Endothelial cell of umbilical vein (primary cell): ENCODE measurements at regions of chr10 and their contacts with region 1.

Region 1: GRCh38 chr10:79608505-79609375 is 2.0 kb upstream of the SFTPA1 start:
- DNase-seq: peak; percentile 13
- H3K4me3 ChIP-seq: no peak overlapping the region
- H3K27ac ChIP-seq: no peak overlapping the region
- H3K4me1 ChIP-seq: no peaks in the 10 kb centered on the region
- H3K27me3 ChIP-seq: peaks cover 0 to 3% of the 10 kb centered on the region in 2 experiments
- CTCF ChIP-seq: peak; percentile 68 to 79
- POLR2A ChIP-seq: no peak

Region 2: GRCh38 chr10:79542626-79543025 is 66.1 kb before region 1 on chr10:
- CTCF ChIA-PET with region 1: no interaction called
- POLR2A ChIA-PET with region 1: no interaction called
- dilution Hi-C with region 1: no loop called
- intact Hi-C with region 1: loop called (anchors 1 kb)
- DNase-seq: no peak
- H3K4me3 ChIP-seq: no peak overlapping the region
- H3K27ac ChIP-seq: no peak overlapping the region
- H3K4me1 ChIP-seq: no peaks in the 10 kb centered on the region
- H3K27me3 ChIP-seq: no peaks in the 10 kb centered on the region
- CTCF ChIP-seq: no peak
- POLR2A ChIP-seq: no peak

Region 3: DNA sequence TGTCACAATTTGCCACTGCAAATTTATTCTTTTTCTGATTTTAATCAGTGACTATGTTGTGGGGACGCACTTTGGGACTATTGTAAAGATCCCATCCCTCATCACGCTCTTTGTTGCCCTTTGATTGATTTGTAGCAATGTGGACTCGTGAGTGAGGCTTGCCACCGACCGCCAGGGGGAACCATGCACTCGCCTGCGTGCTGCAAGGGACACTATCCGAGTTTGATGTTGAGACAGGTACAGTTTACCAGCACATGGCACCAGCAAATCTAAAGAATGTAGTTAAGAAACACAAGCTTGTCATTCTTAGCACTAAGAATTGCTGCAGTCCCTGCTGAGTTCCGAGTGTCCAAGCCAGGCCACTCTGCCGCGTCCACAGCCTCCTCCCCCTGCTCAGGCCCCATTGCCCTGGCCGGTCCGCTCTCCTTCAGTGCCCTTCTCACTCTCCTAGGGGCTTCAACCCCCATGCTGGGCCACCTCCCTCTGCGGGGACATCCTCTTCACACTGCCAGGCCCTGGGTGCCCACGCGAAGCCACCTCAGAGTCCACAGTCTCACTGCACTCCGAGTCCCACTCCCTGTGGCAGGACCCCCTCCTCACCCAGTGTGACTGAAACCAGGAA is 46.5 kb before region 1 on chr10:
- CTCF ChIA-PET with region 1: no interaction called
- POLR2A ChIA-PET with region 1: no interaction called
- dilution Hi-C with region 1: no loop called
- intact Hi-C with region 1: loop called (anchors 1 kb)
- DNase-seq: peak; percentile 56
- H3K4me3 ChIP-seq: no peak overlapping the region
- H3K27ac ChIP-seq: no peak overlapping the region
- H3K4me1 ChIP-seq: no peaks in the 10 kb centered on the region
- H3K27me3 ChIP-seq: peaks cover 0 to 9% of the 10 kb centered on the region in 2 experiments
- CTCF ChIP-seq: peak; percentile 81 to 93
- POLR2A ChIP-seq: no peak

Region 4: GRCh38 chr10:79638318-79638717 is 29.6 kb after region 1 on chr10:
- CTCF ChIA-PET with region 1: no interaction called
- POLR2A ChIA-PET with region 1: no interaction called
- dilution Hi-C with region 1: no loop called
- intact Hi-C with region 1: no loop called
- DNase-seq: no peak
- H3K4me3 ChIP-seq: no peak overlapping the region
- H3K27ac ChIP-seq: no peak overlapping the region
- H3K4me1 ChIP-seq: no peaks in the 10 kb centered on the region
- H3K27me3 ChIP-seq: peaks cover 0 to 2% of the 10 kb centered on the region in 2 experiments
- CTCF ChIP-seq: no peak
- POLR2A ChIP-seq: no peak